ENCODE measurements at regions of chr5 and their contacts with region 1.

Region 1: DNA sequence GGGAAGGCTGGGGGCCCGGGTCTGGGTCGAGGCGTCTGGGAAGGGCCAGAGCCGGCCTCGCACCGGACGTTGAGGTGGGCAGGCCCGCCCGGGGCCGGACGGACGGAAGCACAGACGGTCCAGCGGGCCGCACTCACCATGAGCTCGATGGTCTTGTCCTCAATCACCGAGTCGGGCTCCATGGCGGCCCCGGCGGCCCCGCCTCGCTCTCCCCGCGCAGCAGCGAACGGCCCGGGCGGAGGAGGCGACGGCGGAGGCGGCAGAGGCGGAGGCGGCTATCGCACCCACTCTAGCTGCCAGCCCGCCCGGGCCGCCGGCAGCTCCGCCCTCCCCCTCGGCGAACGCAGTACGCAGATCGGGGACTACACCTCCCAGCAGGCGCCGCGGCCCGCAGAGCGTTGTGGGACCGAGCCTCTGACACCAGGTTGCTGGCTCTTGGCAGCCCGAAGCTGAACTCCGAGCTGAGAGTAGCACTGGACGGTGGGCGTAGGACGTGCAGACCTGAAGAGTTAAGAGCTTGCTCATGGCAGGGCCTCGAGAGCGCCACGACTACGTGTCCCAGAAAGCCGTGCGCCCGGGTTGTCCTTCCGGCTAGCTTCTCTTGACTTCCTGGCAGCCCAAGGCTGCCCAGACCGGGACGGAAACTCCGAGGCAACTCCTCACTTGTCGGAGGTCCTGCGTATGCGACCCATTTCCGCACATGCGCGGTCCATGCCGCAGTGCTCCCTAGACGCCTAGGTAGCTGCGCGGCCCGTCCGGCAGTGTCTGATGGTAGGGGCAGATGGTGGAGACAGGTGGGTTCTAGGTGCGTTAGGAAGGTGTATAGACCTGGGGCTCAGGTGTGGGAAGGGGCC is at the start of gene FBXW11:
- DNase-seq: peak; percentile 97
- ATAC-seq: peak; percentile 84
- H3K4me3 Mint-ChIP-seq: peak within 1 kb of the TSS; percentile 98
- H3K27ac Mint-ChIP-seq: peak within 1 kb of the TSS; percentile 97
- H3K4me1 Mint-ChIP-seq: peaks cover 53% of the 10 kb centered on the region
- H3K27me3 Mint-ChIP-seq: no peaks in the 10 kb centered on the region
- CTCF ChIP-seq: no peak
- total RNA-seq, gene FBXW11: 49.3 to 52.6 TPM

Region 2: GRCh38 chr5:171387345-171387969 is 619.1 kb before region 1 on chr5 and contains the start of gene NPM1:
- CTCF ChIA-PET with region 1: no interaction called
- POLR2A ChIA-PET with region 1: interaction called, 26 read pairs
- intact Hi-C with region 1: no loop called
- DNase-seq: peak; percentile 97
- ATAC-seq: peak; percentile 84
- H3K4me3 Mint-ChIP-seq: peak within 1 kb of the TSS; percentile 98
- H3K27ac Mint-ChIP-seq: peak within 1 kb of the TSS; percentile 100
- H3K4me1 Mint-ChIP-seq: peaks cover 37% of the 10 kb centered on the region
- H3K27me3 Mint-ChIP-seq: peaks cover 3% of the 10 kb centered on the region
- CTCF ChIP-seq: no peak
- total RNA-seq, gene NPM1: 3,203 to 3,498 TPM

Region 3: DNA sequence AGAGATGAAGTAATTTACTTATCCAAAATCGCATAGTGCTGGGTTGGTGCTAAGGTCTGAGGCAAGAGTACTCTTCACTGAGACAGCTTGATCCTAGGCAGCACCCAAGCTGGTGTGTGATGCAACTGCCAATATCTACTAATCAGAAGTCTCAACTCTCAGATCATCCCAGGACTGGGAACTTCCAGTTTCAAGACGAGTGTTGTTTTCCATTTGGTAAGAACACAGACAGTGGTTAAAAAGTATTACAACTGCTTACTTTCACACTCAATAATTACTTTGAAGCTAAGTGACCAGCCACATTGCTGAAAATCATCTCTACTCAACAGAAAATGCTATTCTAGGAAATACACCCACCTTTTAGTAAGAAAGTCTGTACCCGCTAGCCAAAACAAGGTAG is 45.4 kb before region 1 on chr5:
- CTCF ChIA-PET with region 1: interaction called, 11 read pairs
- POLR2A ChIA-PET with region 1: interaction called, 115 read pairs
- intact Hi-C with region 1: loop called (anchors 2 kb)
- DNase-seq: peak; percentile 81
- ATAC-seq: peak; percentile 67
- H3K4me3 Mint-ChIP-seq: peak overlapping the region; percentile 47
- H3K27ac Mint-ChIP-seq: peak overlapping the region; percentile 86
- H3K4me1 Mint-ChIP-seq: peaks cover 90% of the 10 kb centered on the region
- H3K27me3 Mint-ChIP-seq: no peaks in the 10 kb centered on the region
- CTCF ChIP-seq: no peak

Region 4: DNA sequence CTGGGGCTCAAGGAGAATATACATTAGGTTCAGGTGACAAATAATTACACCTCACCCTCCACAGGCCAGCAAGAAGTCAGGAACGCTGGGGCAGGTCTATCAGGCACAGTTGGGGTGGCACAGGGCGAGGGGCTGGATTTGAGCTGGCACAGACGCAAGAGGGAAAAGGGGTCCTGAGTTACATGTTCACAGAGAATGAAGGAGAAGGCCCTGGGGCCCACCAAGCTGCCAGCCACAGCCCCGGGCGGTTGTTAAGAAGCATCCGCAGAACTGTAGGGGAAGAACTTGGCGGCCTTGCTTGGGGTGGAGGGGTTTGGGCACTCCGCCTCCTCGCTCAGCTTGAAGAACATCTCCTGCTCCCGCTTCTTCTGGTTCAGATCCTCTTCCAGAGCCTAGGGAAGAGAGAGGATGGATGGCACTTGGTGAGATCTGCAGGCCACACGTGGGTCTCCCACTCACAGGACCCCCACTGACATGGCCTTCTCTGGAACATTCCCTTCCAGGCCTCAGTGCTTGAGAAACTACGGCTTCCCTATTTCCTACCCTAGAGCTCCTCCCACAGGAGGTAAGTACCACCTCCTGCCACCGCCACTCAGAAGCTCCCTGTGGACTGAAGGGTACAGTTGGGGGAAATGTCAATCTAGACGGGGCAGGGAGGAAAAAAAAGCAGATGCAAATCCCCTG is 38.2 kb after region 1 on chr5:
- CTCF ChIA-PET with region 1: interaction called, 11 read pairs
- POLR2A ChIA-PET with region 1: interaction called, 4 read pairs
- intact Hi-C with region 1: no loop called
- DNase-seq: no peak
- ATAC-seq: no peak
- H3K4me3 Mint-ChIP-seq: no peak overlapping the region
- H3K27ac Mint-ChIP-seq: peak overlapping the region; percentile 67
- H3K4me1 Mint-ChIP-seq: peaks cover 20% of the 10 kb centered on the region
- H3K27me3 Mint-ChIP-seq: no peaks in the 10 kb centered on the region
- CTCF ChIP-seq: no peak

Region 5: DNA sequence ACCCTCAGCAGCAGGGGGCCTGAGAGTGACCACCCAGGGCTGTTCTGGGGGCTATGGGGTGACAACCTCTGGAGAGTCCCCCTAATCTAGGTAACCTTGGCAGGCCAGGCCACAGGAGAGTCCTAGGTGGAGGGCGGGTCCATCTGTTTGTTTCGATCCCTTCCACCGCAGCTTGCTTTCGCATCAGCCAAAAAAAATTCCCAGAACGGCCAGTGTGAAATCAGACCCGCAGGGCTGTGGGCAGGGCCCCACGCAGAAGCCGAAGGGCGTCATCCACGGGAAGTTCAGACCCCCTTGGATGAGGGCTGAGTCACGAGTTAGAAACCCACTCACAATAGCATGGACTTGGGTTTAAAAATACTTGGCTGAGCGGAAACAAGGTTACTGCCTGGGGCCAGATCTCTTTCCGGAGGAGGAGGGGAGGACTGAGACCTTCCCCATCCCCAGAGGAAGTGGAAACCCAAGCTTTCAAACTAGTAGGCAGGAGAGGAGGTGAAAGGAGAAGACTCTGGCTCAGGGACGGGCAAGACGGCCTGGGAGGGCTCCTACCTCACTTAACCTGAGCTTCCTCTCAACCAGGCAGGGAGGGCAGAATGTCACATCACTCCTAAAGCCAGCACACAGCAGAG is 172.9 kb after region 1 on chr5:
- CTCF ChIA-PET with region 1: no interaction called
- POLR2A ChIA-PET with region 1: interaction called, 4 read pairs
- intact Hi-C with region 1: loop called (anchors 5 kb)
- DNase-seq: peak; percentile 71
- ATAC-seq: peak; percentile 21
- H3K4me3 Mint-ChIP-seq: peak overlapping the region; percentile 83
- H3K27ac Mint-ChIP-seq: peak overlapping the region; percentile 94
- H3K4me1 Mint-ChIP-seq: peaks cover 81% of the 10 kb centered on the region
- H3K27me3 Mint-ChIP-seq: no peaks in the 10 kb centered on the region
- CTCF ChIP-seq: no peak

Measured in activated CD8-positive, alpha-beta T cell treated with anti-CD3 and anti-CD28 coated beads for 36 hours (primary cell).